ENCODE measurements at regions of chr5 and their contacts with region 1.

Region 1: GRCh38 chr5:159209438-159210305 is at the start of gene RNF145:
- DNase-seq: peak; percentile 98
- ATAC-seq: peak; percentile 80
- H3K4me3 ChIP-seq: peak within 1 kb of the TSS; percentile 62 to 91 (median 82)
- H3K4me3 Mint-ChIP-seq: peak within 1 kb of the TSS; percentile 98
- H3K27ac ChIP-seq: peak within 1 kb of the TSS; percentile 84 to 85
- H3K27ac Mint-ChIP-seq: peak within 1 kb of the TSS; percentile 97
- H3K4me1 ChIP-seq: peaks cover 38 to 43% of the 10 kb centered on the region in 2 donors
- H3K4me1 Mint-ChIP-seq: peaks cover 50% of the 10 kb centered on the region
- H3K27me3 ChIP-seq: no peaks in the 10 kb centered on the region
- H3K27me3 Mint-ChIP-seq: no peaks in the 10 kb centered on the region
- CTCF ChIP-seq: no peak
- total RNA-seq, gene RNF145: 56.0 and 57.2 TPM in 2 replicates

Region 2: DNA sequence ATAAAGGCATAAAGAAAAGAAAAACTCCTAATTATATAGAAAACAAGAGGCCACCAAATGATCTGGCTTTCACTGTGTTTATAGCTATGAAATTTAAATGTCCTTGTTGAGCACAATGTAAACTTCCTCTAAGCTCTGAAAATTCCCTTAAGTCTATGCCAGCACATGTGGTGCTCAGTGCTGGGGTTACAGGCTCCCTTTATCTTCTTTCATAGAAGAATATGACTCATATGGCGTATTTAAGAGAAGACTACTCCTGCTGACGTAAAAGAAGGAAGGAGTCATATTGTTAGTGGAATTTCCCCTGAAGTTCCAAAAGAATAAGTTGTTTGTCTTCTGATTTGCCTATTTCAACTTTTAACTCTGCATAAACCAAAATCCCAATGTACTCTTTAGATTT is 30.7 kb before region 1 on chr5:
- CTCF ChIA-PET with region 1: no interaction called
- POLR2A ChIA-PET with region 1: interaction called, 3 read pairs
- intact Hi-C with region 1: loop called (anchors 2 kb)
- DNase-seq: peak; percentile 57
- ATAC-seq: peak; percentile 60
- H3K4me3 ChIP-seq: no peak overlapping the region
- H3K4me3 Mint-ChIP-seq: peak overlapping the region; percentile 45
- H3K27ac ChIP-seq: peak overlapping the region in 1 of 2 donors; percentile 69
- H3K27ac Mint-ChIP-seq: peak overlapping the region; percentile 64
- H3K4me1 ChIP-seq: peaks cover 15 to 34% of the 10 kb centered on the region in 2 donors
- H3K4me1 Mint-ChIP-seq: peaks cover 41% of the 10 kb centered on the region
- H3K27me3 ChIP-seq: no peaks in the 10 kb centered on the region
- H3K27me3 Mint-ChIP-seq: no peaks in the 10 kb centered on the region
- CTCF ChIP-seq: no peak

Region 3: GRCh38 chr5:159262859-159263567 is 53.3 kb after region 1 on chr5 and contains the start of gene UBLCP1:
- CTCF ChIA-PET with region 1: no interaction called
- POLR2A ChIA-PET with region 1: interaction called, 7 read pairs
- intact Hi-C with region 1: loop called (anchors 1 kb)
- DNase-seq: peak; percentile 94
- ATAC-seq: peak; percentile 82
- H3K4me3 ChIP-seq: peak within 1 kb of the TSS; percentile 84 to 96 (median 95)
- H3K4me3 Mint-ChIP-seq: peak within 1 kb of the TSS; percentile 96
- H3K27ac ChIP-seq: peak within 1 kb of the TSS; percentile 87 to 88
- H3K27ac Mint-ChIP-seq: peak within 1 kb of the TSS; percentile 97
- H3K4me1 ChIP-seq: peaks cover 17 to 18% of the 10 kb centered on the region in 2 donors
- H3K4me1 Mint-ChIP-seq: peaks cover 32% of the 10 kb centered on the region
- H3K27me3 ChIP-seq: no peaks in the 10 kb centered on the region
- H3K27me3 Mint-ChIP-seq: no peaks in the 10 kb centered on the region
- CTCF ChIP-seq: no peak
- total RNA-seq, gene UBLCP1: 25.1 and 25.5 TPM in 2 replicates

Region 4: DNA sequence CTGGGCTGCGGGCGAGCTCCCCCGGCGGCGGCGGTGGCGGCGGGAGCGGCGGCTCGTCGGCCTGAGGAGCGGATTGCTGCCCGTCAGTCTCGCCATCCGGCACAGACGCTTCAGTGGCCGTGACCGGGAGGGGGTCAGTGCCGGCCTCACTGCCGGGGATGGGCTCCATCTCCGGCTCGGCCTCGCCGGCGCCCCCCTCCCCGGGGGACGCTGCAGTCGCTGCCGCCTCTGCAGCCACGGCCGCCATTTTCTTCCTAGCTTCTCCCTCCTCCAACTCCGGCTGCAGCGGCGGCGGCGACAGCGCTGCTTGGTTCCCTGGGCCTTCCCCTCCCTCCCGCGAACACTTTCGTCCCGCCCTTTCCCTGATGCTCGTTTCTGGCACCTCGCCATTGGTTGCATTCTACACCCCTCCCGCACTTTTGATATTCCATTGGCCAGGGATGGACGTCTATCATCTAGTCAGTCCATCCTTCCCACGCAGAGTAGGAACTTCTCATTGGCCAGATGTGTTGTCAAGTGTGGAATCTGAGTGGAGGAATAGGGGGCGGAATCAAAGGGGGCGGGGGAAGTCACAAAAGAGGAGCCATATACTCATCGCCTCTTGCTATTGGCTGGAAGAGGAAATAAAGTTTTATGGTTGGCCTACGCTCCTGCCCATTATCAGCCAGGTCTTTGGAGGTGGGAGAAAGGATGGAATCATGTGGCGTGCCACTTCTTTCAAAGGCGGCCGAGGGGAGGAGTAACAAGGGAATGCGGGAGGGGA is 909.7 kb after region 1 on chr5 and contains the start of gene PWWP2A:
- CTCF ChIA-PET with region 1: no interaction called
- POLR2A ChIA-PET with region 1: no interaction called
- intact Hi-C with region 1: loop called (anchors 1 kb)
- DNase-seq: peak; percentile 99
- ATAC-seq: peak; percentile 90
- H3K4me3 ChIP-seq: peak within 1 kb of the TSS; percentile 56 to 96 (median 72)
- H3K4me3 Mint-ChIP-seq: peak within 1 kb of the TSS; percentile 91
- H3K27ac ChIP-seq: peak within 1 kb of the TSS; percentile 51 to 83
- H3K27ac Mint-ChIP-seq: peak within 1 kb of the TSS; percentile 96
- H3K4me1 ChIP-seq: peaks cover 6 to 7% of the 10 kb centered on the region in 2 donors
- H3K4me1 Mint-ChIP-seq: peaks cover 16% of the 10 kb centered on the region
- H3K27me3 ChIP-seq: no peaks in the 10 kb centered on the region
- H3K27me3 Mint-ChIP-seq: peaks cover 4% of the 10 kb centered on the region
- CTCF ChIP-seq: no peak
- total RNA-seq, gene PWWP2A: 48.8 and 50.1 TPM in 2 replicates

Measured in B cell (primary cell).